Activated CD4-positive, alpha-beta T cell treated with anti-CD3 and anti-CD28 coated beads, Interleukin-2, amount 10 ng/mL, durations not matched to agents 7 days and 5 days (primary cell): ENCODE measurements at regions of chr11 and their contacts with region 1.

Region 1: DNA sequence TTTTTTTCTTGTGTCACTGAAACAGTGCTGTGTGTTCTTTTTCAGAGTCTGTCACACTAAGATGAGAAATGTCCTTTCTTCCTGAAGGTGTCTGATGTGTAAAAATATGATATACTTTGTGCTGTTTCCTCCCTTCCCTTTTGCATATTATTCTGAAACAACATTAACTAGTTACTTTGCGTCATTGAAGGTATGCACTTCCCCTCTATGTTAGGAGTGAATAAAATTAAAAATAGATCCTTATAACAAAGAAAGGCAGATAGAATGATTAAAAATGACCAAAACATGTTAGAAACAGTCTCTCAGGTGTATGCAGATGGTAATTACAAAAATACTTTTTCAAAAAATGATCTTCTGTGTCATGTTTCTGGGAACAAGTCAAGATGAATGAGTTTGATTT is 1.6 kb upstream of the RAB30 start:
- DNase-seq: no peak
- H3K4me3 Mint-ChIP-seq: no peak overlapping the region
- H3K27ac Mint-ChIP-seq: no peak overlapping the region
- H3K4me1 Mint-ChIP-seq: peaks cover 42% of the 10 kb centered on the region
- H3K27me3 Mint-ChIP-seq: peaks cover 2% of the 10 kb centered on the region

Region 2: DNA sequence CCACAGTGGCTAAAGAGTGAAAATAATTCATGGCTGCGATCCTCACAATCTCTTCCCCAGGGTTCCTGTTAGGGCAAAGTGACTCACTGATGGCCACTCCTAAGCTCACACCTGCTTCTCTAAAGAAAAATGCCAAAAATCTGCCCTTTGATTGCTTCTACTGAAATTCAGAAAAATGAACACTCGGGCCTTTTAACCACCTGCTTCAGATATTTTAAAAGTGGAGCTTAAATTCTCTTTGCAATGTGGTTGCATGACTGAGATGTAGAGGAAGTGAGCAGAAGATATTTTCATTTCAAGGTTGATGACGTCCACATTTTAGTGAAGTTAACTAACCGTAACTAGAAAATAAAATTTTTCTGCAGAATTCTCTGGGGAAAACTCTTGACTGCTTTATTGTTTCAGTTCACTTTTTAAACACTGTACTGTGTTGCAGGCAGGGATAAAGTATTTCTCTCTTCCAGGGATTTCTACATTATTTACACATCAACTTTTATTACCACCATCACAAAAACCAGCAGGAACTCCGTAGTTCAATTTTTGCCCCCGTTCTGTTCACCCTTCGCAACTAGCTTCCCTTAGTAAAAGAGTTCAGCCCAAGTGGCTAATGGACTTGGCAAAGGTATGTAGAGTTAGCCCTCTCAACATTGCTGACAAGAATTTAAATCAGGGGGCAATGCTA is 10.0 kb before region 1 on chr11:
- CTCF ChIA-PET with region 1: interaction called, 11 read pairs
- POLR2A ChIA-PET with region 1: interaction called, 3 read pairs
- DNase-seq: no peak
- H3K4me3 Mint-ChIP-seq: peak overlapping the region; percentile 74
- H3K27ac Mint-ChIP-seq: peak overlapping the region; percentile 97
- H3K4me1 Mint-ChIP-seq: peaks cover 24% of the 10 kb centered on the region
- H3K27me3 Mint-ChIP-seq: no peaks in the 10 kb centered on the region